ENCODE measurements at regions of chr17 and their contacts with region 1.

Region 1: GRCh38 chr17:49997791-49998703 is 3.0 kb upstream of the DLX3 start:
- DNase-seq: peak; percentile 86 to 97 (median 94)
- H3K4me3 ChIP-seq: no peak overlapping the region
- H3K27ac ChIP-seq: no peak overlapping the region
- H3K4me1 ChIP-seq: peaks cover 0 to 16% (median 11%) of the 10 kb centered on the region in 3 donors
- H3K27me3 ChIP-seq: peaks cover 26% of the 10 kb centered on the region
- CTCF ChIP-seq: peak; percentile 94

Region 2: DNA sequence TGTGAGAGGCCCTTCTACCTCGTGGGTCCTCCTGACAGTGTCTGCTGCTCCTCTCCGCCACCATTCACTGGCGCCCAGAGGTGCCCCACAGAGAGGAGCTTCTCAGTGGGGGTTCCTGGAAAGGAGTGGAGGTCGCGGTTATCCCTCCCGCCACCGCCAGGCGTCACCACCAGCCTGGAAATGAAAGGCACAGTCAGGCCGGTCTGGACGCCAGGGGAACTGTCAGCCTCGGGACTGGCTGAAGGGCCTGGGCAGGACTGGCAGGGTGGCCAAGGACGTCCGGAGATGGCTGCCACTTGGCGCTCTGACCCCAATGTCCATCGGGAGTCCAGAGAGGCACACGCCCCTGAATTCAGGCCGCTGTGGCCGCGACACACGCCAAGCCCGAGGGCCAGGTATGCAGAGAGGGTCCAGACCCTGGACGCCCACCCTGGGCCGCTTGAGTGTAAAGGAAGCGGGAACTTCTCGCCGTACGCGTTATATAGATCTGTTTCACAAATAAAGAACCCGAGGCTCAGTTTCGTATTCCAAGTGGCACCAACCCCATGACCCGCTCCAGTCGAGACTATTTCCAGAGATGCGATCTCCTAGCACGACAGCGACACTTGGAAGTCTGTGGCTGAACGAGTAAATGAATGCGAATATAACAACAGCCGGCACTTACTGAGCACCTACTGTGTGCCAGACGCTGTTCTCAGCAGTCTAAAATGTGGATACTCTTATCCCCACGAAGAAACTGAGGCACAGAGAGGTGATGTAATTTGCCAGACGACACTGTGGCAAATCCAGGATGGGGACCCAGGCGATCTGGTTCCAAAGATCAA is 430.0 kb before region 1 on chr17:
- intact Hi-C with region 1: loop called (anchors 10 kb)
- DNase-seq: peak; percentile 86 to 95 (median 90)
- H3K4me3 ChIP-seq: peak overlapping the region in 1 of 3 donors; percentile 67
- H3K27ac ChIP-seq: peak overlapping the region in 1 of 2 donors; percentile 32
- H3K4me1 ChIP-seq: peaks cover 0 to 10% (median 0%) of the 10 kb centered on the region in 3 donors
- H3K27me3 ChIP-seq: no peaks in the 10 kb centered on the region
- CTCF ChIP-seq: peak; percentile 98

Region 3: DNA sequence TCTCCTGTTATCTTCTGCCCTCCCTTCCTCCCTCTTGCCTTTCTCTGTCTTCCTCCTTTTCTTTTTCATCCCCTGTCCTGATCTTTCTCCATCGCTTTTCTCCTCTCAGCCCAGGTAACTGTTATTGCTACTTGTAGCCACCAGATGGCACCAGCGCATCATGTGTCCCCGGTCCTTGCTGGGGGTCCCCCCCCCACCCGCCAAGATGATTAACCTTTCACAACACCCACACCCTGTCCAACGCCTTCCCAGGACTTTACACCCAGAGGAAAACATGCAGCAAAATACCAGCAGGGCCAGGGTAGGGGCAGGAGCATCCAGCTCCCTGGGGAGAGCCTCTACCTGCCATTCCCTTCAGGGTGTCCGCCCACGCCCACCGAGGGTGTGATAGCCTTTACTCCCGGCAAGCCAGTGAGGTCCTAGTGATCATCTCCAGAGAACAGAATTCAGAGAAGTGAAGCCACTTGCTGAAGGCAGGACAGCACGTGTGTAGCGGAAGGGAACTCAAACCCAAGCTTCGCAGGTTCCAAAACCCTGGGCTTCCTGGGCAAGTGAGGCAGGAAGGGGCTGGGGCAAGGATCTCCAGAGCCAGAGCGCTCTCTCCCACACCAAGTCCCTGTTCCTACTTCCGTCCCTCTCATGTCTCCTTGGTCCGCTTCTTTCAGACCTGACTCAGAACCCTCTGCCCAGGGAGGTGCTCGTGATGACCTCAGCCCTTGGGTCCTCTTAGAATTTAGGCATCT is 136.7 kb before region 1 on chr17:
- intact Hi-C with region 1: loop called (anchors 5 kb)
- DNase-seq: peak in 4 of 5 donors; percentile 61 to 77 (median 70)
- H3K4me3 ChIP-seq: no peak overlapping the region
- H3K27ac ChIP-seq: no peak overlapping the region
- H3K4me1 ChIP-seq: peaks cover 0 to 5% (median 0%) of the 10 kb centered on the region in 3 donors
- H3K27me3 ChIP-seq: no peaks in the 10 kb centered on the region
- CTCF ChIP-seq: peak; percentile 86

Region 4: DNA sequence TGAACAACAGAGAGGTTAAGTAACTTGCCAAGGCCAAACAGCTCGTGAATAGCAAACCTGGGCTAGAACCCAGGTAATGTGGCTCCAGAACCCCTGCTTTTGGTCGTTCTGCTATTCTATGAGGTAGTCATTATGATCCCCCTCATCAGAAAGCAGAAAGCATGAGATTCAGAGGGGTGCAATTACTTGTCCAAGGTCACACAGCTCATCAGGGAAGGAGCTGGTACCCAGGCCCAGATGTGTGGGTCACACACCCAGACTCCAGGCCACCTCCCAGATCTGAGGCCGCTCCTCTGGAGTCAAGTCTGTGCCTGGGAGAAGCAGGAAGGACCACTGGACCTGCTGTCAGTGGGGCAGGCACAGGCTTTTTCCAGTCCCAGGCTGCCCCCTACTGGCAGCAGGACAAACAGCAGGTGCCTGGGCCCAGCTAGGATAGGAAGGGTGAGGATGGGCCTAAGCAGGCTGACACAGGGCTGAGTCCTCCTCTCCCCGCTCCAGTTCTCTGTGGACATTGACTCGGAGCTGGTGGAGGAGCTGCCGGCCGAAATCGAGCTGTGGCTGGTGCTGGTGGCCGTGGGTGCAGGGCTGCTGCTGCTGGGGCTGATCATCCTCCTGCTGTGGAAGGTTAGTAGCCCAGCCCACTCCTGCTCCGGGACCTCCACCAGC is 89.3 kb after region 1 on chr17:
- intact Hi-C with region 1: no loop called
- DNase-seq: peak; percentile 54 to 89 (median 85)
- H3K4me3 ChIP-seq: no peak overlapping the region
- H3K27ac ChIP-seq: no peak overlapping the region
- H3K4me1 ChIP-seq: no peaks in the 10 kb centered on the region
- H3K27me3 ChIP-seq: no peaks in the 10 kb centered on the region
- CTCF ChIP-seq: peak; percentile 93

Region 5: GRCh38 chr17:50114849-50115357 is 116.9 kb after region 1 on chr17:
- intact Hi-C with region 1: no loop called
- DNase-seq: peak in 3 of 5 donors; percentile 42 to 79 (median 60)
- H3K4me3 ChIP-seq: no peak overlapping the region
- H3K27ac ChIP-seq: no peak overlapping the region
- H3K4me1 ChIP-seq: peaks cover 0 to 20% (median 19%) of the 10 kb centered on the region in 3 donors
- H3K27me3 ChIP-seq: no peaks in the 10 kb centered on the region
- CTCF ChIP-seq: peak; percentile 61